ENCODE measurements at regions of chr12 and their contacts with region 1.

Region 1: DNA sequence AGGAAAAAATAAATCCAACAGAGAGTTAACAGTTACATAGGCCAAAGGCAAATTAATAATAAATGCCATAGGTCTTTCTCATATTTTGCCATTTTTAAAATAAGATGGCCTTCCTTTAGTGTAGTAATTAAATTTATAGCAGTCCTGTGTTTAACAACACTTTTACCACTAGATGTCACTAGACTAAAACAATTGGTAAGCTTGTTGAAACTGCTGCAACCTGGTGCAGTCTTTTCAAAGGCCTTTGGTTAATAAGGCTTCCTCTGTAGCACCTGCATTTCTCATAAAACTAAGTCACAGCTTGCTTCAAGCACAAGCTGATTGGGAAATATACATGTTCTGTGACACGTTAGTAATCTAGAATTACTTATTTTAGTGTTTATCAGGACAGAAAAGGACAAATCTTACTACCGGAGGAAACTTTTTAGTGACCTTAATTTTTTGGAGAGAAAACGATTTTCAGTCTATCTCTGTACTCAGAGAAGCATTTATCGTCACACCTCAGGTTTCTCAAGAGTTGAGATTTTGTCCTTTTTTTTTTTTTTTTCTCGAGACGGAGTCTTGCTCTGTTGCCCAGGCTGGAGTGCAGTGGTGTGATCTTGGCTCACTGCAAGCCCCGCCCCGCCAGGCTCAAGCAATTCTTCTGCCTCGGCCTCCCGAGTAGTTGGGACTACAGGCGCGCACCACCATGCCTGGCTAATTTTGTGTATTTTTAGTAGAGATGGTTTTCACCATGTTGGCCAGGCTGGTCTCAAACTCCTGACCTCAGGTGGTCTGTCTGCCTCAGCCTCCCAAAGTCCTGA is 20.0 kb downstream of the BORCS5 start:
- DNase-seq: peak; percentile 67
- CTCF ChIP-seq: peak; percentile 51

Region 2: DNA sequence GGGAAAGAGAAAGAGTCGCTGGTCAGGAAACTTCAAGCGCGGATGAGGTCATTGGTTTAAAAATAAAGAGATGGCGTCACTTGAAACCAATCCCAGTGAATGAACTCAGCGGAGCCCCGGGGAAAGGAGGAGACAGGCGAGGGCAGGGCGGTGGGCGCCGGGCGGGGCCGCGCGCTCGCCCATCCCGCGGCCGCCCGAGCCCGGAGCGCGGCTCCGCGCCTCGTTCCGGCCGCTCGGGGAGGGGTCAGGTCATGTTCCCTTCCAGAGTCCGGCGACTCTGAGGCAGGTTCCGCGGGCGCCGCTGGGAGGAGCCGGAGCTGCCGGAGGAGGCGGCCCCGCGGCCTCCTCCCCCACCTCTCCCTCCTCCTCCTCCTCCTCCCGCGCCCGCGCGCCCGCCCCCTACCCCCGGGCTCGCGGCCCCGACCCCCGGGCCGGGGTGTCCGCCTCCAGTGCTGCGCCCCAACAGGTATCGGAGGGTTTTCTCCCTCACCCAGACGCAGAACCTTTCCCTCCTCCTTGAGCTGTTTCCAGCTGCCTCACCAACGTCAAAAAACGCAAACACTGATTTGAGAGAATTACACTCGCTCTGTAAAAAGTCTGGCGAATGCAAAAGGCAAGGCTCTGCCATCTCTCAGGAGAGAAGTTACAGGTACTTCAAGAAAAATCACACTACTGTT is 185.9 kb after region 1 on chr12 and contains the start of gene DUSP16:
- in situ Hi-C with region 1: loop called (anchors 25 kb)
- DNase-seq: peak; percentile 94
- CTCF ChIP-seq: peak; percentile 22

Region 3: GRCh38 chr12:12716793-12717585 is 340.1 kb after region 1 on chr12 and contains the start of gene CDKN1B:
- in situ Hi-C with region 1: loop called (anchors 10 kb)
- DNase-seq: peak; percentile 93
- CTCF ChIP-seq: no peak